ENCODE measurements at regions of chr11 and their contacts with region 1.

Region 1: DNA sequence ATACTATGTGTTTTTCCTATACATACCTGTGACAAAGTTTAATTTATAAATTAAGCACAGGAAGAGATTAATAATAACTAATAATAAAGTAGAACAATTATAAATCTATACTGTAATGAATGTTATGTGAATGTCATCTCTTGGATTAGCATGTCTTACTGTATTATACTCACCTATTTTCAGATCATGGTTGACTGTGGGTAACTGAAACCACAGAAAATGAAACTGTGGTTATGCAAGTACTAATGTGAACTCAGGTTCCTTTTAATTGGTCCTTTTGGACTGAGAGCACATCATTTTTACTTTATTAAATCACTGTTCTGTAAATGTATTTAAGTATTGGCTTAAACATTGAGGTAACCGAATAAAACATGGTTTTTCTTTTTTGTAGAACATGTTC is 108.8 kb downstream of the PPP6R3 start:
- DNase-seq: no peak
- ATAC-seq: no peak
- H3K4me3 Mint-ChIP-seq: no peak overlapping the region
- H3K27ac Mint-ChIP-seq: no peak overlapping the region
- H3K4me1 Mint-ChIP-seq: no peaks in the 10 kb centered on the region
- H3K27me3 Mint-ChIP-seq: no peaks in the 10 kb centered on the region
- CTCF ChIP-seq: no peak

Region 2: DNA sequence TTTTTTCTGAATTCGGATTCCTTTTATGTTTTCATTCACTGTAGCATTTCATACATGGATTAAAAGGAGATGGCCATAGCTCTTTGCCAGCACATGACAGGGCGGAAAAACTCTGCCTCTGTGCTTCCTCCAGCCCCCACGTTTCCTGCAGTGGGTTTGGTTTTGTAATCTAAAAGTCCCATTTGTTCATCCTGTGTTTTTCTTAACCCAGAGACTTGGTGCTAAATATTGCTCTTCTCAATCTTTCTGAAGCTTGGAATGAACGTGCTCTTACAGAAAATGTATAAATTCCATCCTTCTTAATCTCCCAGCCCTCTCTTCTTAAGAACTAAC is 18.9 kb before region 1 on chr11:
- CTCF ChIA-PET with region 1: no interaction called
- POLR2A ChIA-PET with region 1: no interaction called
- DNase-seq: no peak
- ATAC-seq: no peak
- H3K4me3 Mint-ChIP-seq: no peak overlapping the region
- H3K27ac Mint-ChIP-seq: peak overlapping the region; percentile 42; the same call in 1 of the 2 replicates
- H3K4me1 Mint-ChIP-seq: peaks cover 21% of the 10 kb centered on the region
- H3K27me3 Mint-ChIP-seq: no peaks in the 10 kb centered on the region
- CTCF ChIP-seq: no peak

Region 3: GRCh38 chr11:68584097-68584496 is 14.7 kb after region 1 on chr11:
- CTCF ChIA-PET with region 1: interaction called, 10 read pairs
- POLR2A ChIA-PET with region 1: no interaction called
- DNase-seq: peak; percentile 87
- ATAC-seq: peak; percentile 96
- H3K4me3 Mint-ChIP-seq: no peak overlapping the region
- H3K27ac Mint-ChIP-seq: no peak overlapping the region
- H3K4me1 Mint-ChIP-seq: no peaks in the 10 kb centered on the region
- H3K27me3 Mint-ChIP-seq: no peaks in the 10 kb centered on the region
- CTCF ChIP-seq: peak; percentile 84

Measured in WTC11 (cell line).